Activated naive CD4-positive, alpha-beta T cell treated with anti-CD3 and anti-CD28 coated beads for 36 hours (primary cell): ENCODE measurements at regions of chr22 and their contacts with region 1.

Region 1: DNA sequence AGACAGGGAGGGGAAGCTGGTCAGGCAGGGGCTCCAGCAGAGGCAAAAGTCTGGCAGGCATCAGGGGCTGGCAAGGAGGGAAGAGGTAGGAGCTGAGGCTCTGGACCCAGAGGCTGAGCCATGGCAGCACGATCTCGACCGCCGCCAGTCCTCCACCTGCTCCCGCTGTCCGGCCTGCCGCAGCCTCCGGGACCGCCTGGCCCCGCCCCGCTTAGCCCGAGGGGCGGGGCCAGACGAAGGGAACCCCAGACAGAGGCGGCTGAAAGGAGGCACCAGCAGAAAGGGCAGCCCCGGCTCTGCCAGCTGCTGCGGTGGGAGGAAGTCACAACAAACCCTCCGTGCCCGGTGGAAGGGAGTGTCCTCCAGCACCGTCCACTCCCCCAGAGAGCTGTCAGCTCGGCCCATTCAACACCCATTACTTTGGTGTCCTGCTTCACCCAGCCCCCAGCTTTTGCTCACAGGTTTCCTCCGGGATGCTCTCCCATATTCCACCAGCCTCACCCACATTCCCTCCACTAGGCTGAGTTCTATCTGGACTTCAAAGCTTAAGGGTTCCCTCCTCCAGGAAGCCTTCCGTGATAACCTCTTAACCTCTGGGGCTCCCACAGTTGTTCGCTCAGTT is at the start of gene MFNG:
- DNase-seq: peak; percentile 86
- H3K4me3 Mint-ChIP-seq: peak within 1 kb of the TSS; percentile 97
- H3K27ac Mint-ChIP-seq: peak within 1 kb of the TSS; percentile 97
- H3K4me1 Mint-ChIP-seq: peaks cover 65% of the 10 kb centered on the region
- H3K27me3 Mint-ChIP-seq: no peaks in the 10 kb centered on the region
- total RNA-seq, gene MFNG: 83.1 to 90.9 TPM

Region 2: GRCh38 chr22:37229805-37230672 is 256.3 kb before region 1 on chr22:
- CTCF ChIA-PET with region 1: no interaction called
- intact Hi-C with region 1: no loop called
- DNase-seq: peak; percentile 98
- H3K4me3 Mint-ChIP-seq: peak overlapping the region; percentile 67
- H3K27ac Mint-ChIP-seq: peak overlapping the region; percentile 98
- H3K4me1 Mint-ChIP-seq: peaks cover 90% of the 10 kb centered on the region
- H3K27me3 Mint-ChIP-seq: no peaks in the 10 kb centered on the region

Region 3: DNA sequence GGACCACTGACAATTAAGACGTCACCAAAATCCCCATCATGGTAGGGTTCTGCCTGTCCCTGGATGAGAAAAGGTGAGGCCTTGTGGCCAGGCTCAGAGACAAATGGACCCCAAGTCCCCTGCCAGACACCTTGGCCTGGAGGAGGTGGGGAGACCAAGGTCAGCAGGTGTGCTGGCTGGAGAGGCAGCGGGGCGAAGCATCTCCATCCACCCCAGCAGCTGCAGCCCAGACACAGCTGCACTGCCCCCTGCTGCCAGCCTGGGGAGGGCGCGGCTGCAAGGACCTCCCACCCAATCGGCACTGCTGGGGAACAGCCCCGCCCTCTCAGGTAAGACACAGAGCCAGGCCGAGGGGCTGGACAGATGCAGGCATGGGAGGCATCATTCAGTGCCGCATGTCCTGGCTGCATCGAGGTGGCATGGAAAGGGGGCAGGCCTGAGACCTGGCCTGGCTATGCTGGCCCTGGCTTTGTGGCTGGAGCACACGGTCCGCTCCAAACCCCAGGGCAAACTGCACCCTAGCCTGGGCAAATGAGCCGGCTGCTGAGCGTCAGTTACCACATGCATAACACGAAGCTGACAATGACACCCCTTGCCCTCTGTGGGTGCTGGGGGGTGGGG is 12.1 kb after region 1 on chr22:
- CTCF ChIA-PET with region 1: interaction called, 10 read pairs
- intact Hi-C with region 1: no loop called
- DNase-seq: peak; percentile 74
- H3K4me3 Mint-ChIP-seq: no peak overlapping the region
- H3K27ac Mint-ChIP-seq: no peak overlapping the region
- H3K4me1 Mint-ChIP-seq: peaks cover 21% of the 10 kb centered on the region
- H3K27me3 Mint-ChIP-seq: no peaks in the 10 kb centered on the region

Region 4: DNA sequence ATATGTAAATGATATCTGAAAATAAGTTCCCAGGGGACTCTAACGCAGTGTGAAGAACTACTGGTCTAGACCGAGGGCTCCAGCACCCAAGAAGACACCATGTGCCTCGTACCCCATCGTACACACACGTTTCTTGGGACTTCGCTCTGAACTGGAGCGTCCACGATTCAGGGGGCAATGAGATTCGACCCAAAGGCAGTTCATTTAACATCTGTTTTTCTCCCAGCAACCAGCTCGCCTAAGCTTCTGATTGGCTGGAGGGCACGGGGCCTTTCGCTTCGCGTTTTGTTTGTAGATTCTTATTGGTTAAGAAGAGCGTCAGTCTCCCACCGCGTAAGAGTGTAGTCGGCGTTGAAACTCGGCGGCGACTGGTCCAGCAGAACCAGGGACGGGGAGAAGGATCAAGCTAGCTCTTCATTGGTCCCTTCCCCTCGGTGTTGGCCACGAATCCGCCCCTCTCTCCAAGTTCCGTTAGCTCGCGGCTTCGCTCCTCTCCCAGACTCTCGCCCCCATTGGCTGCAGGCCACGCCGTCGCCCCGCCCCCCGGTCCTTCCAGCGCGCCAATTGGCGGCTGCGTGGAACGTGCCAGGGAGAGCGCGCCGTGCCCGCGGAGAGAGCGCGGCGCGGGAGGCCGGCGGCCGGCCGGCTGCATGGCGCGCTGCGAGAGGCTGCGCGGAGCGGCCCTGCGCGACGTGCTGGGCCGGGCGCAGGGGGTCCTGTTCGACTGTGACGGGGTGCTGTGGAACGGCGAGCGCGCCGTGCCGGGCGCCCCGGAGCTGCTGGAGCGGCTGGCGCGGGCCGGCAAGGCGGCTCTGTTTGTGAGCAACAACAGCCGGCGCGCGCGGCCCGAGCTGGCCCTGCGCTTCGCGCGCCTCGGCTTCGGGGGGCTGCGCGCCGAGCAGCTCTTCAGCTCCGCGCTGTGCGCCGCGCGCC is 172.1 kb after region 1 on chr22 and contains the start of gene PDXP:
- CTCF ChIA-PET with region 1: no interaction called
- intact Hi-C with region 1: no loop called
- DNase-seq: peak; percentile 98
- H3K4me3 Mint-ChIP-seq: peak within 1 kb of the TSS; percentile 92
- H3K27ac Mint-ChIP-seq: peak within 1 kb of the TSS; percentile 83
- H3K4me1 Mint-ChIP-seq: peaks cover 39% of the 10 kb centered on the region
- H3K27me3 Mint-ChIP-seq: no peaks in the 10 kb centered on the region
- total RNA-seq, gene PDXP: 17.4 to 19.2 TPM